ENCODE measurements at regions of chr17 and their contacts with region 1.

Region 1: GRCh38 chr17:8248751-8249607 is at the start of gene PFAS:
- DNase-seq: peak; percentile 97
- ATAC-seq: peak; percentile 62 to 69
- H3K4me3 ChIP-seq: peak within 1 kb of the TSS; percentile 74
- H3K27ac ChIP-seq: peak within 1 kb of the TSS; percentile 97 to 99
- H3K4me1 ChIP-seq: peaks cover 8% of the 10 kb centered on the region
- CTCF ChIP-seq: no peak
- EP300 ChIP-seq: no peak
- POLR2A ChIP-seq: peak; percentile 91
- RAD21 ChIP-seq: no peak
- polyA plus RNA-seq, gene PFAS: 51.9 and 64.5 TPM in 2 replicates

Region 2: DNA sequence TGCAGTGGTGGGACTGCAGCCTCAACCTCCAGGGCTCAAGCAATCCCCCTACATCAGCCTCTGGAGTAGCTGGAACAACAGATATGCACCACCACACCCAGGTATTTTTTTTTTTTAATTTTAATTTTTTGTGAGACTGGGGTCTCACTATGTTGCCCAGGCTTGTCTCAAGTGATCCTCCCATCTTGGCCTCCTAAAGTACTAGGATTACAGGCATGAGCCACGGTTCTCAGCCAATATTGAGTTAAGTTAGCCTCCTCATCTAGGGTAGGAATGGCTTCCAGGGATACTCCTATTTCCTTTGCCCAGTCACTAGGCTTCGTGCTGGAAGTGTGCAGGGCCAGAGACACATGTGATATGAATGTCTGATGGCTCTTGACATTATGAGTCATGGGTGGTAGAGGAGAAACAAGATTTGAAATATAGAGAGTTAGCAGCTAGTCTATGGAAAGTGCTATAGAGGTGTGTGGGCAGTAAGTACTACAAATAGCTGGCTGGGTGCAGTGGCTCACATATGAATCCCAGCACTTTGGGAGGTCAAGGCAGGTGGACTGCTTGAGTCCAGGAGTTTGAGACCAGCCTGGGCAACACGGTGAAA is 117.0 kb before region 1 on chr17:
- CTCF ChIA-PET with region 1: no interaction called
- POLR2A ChIA-PET with region 1: no interaction called
- DNase-seq: no peak
- ATAC-seq: peak; percentile 15 to 64
- H3K4me3 ChIP-seq: no peak overlapping the region
- H3K27ac ChIP-seq: no peak overlapping the region
- H3K4me1 ChIP-seq: peaks cover 22% of the 10 kb centered on the region
- CTCF ChIP-seq: no peak
- EP300 ChIP-seq: no peak
- POLR2A ChIP-seq: no peak
- RAD21 ChIP-seq: no peak

Region 3: DNA sequence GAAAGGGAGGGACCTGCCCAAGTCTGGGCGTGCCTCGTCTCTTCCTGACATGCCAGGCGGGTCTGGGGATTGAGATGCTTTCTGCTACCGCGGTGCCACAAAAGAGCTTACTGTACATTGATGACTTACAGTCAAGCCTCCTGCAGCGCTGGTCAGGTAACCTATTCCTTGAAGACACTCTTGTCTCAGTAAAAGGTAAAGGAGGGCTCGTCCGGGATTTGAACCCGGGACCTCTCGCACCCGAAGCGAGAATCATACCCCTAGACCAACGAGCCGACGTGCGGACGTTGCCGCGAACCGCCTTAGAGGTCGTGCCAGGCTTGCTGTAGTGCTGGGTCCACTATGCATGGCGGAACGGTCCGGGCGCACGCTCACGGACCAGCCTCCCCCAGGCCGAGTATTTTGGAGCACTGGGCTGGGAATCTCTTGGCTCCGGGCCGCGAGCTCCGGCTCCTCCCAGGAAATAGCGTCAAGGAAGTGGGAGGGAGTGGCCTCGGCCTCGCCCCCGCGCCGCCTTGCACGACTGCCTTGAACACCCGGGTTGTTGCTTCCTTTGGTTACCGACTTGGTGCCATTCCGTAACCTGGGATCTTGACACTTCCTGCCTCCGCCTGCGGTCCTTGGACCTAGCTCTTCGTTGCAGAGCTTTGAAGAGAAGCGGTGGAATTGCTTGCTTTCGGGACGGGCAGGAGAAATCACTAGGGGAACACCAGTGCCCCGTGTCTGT is 26.2 kb before region 1 on chr17:
- CTCF ChIA-PET with region 1: interaction called, 160 read pairs
- POLR2A ChIA-PET with region 1: interaction called, 159 read pairs
- DNase-seq: peak; percentile 85 to 98
- ATAC-seq: peak; percentile 38 to 64
- H3K4me3 ChIP-seq: peak overlapping the region; percentile 78
- H3K27ac ChIP-seq: peak overlapping the region; percentile 95 to 97
- H3K4me1 ChIP-seq: peaks cover 32% of the 10 kb centered on the region
- CTCF ChIP-seq: no peak
- EP300 ChIP-seq: no peak
- POLR2A ChIP-seq: peak; percentile 85
- RAD21 ChIP-seq: no peak

Region 4: GRCh38 chr17:8275421-8276290 is 26.7 kb after region 1 on chr17:
- CTCF ChIA-PET with region 1: interaction called, 14 read pairs
- POLR2A ChIA-PET with region 1: interaction called, 3 read pairs
- DNase-seq: no peak
- ATAC-seq: peak in 1 of 2 experiments; percentile 28; a peak in 2 of 6 replicates
- H3K4me3 ChIP-seq: no peak overlapping the region
- H3K27ac ChIP-seq: no peak overlapping the region
- H3K4me1 ChIP-seq: no peaks in the 10 kb centered on the region
- CTCF ChIP-seq: no peak
- EP300 ChIP-seq: no peak
- POLR2A ChIP-seq: no peak
- RAD21 ChIP-seq: no peak

Region 5: GRCh38 chr17:8288336-8289102 is 39.5 kb after region 1 on chr17 and contains the start of gene RANGRF:
- CTCF ChIA-PET with region 1: interaction called, 7 read pairs
- POLR2A ChIA-PET with region 1: interaction called, 18 read pairs
- DNase-seq: peak; percentile 86 to 99
- ATAC-seq: peak; percentile 82 to 92
- H3K4me3 ChIP-seq: peak within 1 kb of the TSS; percentile 85
- H3K27ac ChIP-seq: peak within 1 kb of the TSS; percentile 96 to 98
- H3K4me1 ChIP-seq: peaks cover 21% of the 10 kb centered on the region
- CTCF ChIP-seq: no peak
- EP300 ChIP-seq: no peak
- POLR2A ChIP-seq: peak; percentile 91
- RAD21 ChIP-seq: no peak
- polyA plus RNA-seq, gene RANGRF: 56.4 and 60.4 TPM in 2 replicates

Region 6: DNA sequence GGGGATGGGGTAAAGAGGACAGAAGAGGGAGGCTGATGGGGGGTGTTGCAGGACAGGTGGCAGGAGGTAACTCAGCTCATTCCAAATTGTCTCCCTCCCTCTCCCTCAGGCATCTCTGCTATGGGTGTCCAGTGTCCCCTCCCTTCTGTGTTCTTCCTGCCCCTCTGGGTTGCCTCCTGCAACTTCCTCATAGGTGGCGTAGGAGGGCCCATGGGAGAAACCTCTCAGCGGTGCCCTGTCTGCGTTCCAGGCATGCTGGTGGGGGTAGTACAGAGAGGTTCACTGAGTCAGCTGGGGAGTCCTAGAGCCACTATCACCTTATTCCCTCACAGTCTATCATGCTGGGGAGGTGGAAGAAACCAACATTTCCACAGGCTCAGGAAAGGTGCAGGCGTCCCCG is 75.9 kb after region 1 on chr17:
- CTCF ChIA-PET with region 1: no interaction called
- POLR2A ChIA-PET with region 1: no interaction called
- DNase-seq: no peak
- ATAC-seq: peak; percentile 19 to 36; a peak in 3 of 6 replicates
- H3K4me3 ChIP-seq: no peak overlapping the region
- H3K27ac ChIP-seq: no peak overlapping the region
- H3K4me1 ChIP-seq: no peaks in the 10 kb centered on the region
- CTCF ChIP-seq: no peak
- EP300 ChIP-seq: no peak
- POLR2A ChIP-seq: no peak
- RAD21 ChIP-seq: no peak